Activated CD8-positive, alpha-beta T cell treated with anti-CD3 and anti-CD28 coated beads, Interleukin-2, amount 10 ng/mL, durations not matched to agents 7 days and 5 days (primary cell): ENCODE measurements at regions of chr6 and their contacts with region 1.

Region 1: GRCh38 chr6:159042003-159042825 is 2.6 kb downstream of the TAGAP start:
- DNase-seq: peak; percentile 88
- ATAC-seq: peak; percentile 51
- H3K4me3 Mint-ChIP-seq: peak overlapping the region; percentile 100
- H3K27ac Mint-ChIP-seq: peak overlapping the region; percentile 99
- H3K4me1 Mint-ChIP-seq: peaks cover 67% of the 10 kb centered on the region
- H3K27me3 Mint-ChIP-seq: no peaks in the 10 kb centered on the region

Region 2: DNA sequence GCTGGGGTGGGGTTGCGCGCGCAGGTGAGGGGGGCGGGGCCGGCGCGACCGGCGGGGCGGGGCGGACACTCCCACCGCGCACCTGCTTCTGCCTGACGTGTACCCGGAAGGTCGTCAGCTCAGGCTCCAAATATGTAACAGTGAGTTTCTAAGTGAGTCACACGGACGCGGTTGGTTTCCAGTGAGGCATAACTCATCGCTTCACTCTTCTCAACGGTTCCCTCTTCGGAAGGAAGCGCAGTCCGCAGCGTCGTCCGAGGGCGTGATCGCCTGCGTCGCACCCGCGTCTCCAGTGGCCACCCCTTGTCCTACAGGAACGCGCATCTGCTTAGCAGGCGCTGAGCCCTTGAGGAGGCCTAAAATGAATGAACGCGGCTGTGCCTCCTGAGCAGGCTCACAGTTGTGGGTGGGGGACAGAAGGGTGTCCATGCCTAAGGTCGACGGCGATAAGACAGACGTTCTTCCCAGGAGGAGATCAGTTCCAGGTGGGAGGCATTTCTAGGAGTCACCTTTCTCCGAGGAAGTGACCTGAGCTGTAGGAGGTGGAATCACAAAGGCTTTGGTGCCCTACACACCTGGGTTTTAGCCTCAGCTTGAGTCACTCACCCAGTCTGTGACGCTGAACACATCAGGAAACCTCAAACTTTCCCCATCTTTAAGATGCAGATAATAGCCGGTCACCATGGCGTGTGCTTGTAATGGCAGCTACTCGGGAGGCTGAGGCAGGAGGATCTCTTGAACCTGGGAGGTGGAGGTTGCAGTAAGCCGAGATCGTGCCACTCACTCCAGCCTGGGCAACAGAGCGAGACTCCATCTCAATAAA is 172.2 kb before region 1 on chr6:
- CTCF ChIA-PET with region 1: no interaction called
- POLR2A ChIA-PET with region 1: interaction called, 16 read pairs
- DNase-seq: peak; percentile 96
- ATAC-seq: peak; percentile 94
- H3K4me3 Mint-ChIP-seq: peak overlapping the region; percentile 74
- H3K27ac Mint-ChIP-seq: peak overlapping the region; percentile 99
- H3K4me1 Mint-ChIP-seq: peaks cover 37% of the 10 kb centered on the region
- H3K27me3 Mint-ChIP-seq: peaks cover 8% of the 10 kb centered on the region

Region 3: DNA sequence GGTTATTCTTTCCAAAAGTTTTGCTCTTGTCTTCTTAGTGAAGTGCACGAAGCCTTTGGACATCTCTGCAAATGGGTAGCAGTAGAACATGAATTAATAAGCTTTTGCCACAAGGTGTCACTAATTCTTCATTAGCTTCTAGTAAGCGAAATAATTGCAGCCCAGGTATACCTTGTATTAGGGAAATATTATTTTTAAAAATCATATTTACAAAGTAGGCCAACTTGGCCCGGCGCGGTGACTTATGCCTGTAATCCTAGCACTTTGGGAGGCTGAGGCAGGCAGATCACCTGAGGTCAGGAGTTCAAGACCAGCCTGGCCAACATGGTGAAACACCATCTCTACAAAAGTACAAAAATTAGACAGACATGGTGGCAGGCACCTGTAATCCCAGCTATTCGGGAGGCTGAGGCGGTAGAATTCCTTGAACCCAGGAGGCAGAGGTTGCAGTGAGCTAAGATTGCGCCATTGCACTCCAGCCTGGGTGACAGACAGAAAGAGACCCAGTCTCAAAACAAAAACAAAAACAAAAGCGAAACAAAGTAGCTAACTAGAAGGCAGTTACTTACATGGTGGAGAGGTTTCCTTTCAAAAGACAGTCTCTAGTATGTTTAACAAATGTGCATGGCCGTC is 33.4 kb before region 1 on chr6:
- CTCF ChIA-PET with region 1: interaction called, 132 read pairs
- POLR2A ChIA-PET with region 1: interaction called, 7 read pairs
- DNase-seq: peak; percentile 20
- ATAC-seq: peak; percentile 68
- H3K4me3 Mint-ChIP-seq: peak overlapping the region; percentile 7
- H3K27ac Mint-ChIP-seq: peak overlapping the region; percentile 18
- H3K4me1 Mint-ChIP-seq: peaks cover 19% of the 10 kb centered on the region
- H3K27me3 Mint-ChIP-seq: no peaks in the 10 kb centered on the region

Region 4: DNA sequence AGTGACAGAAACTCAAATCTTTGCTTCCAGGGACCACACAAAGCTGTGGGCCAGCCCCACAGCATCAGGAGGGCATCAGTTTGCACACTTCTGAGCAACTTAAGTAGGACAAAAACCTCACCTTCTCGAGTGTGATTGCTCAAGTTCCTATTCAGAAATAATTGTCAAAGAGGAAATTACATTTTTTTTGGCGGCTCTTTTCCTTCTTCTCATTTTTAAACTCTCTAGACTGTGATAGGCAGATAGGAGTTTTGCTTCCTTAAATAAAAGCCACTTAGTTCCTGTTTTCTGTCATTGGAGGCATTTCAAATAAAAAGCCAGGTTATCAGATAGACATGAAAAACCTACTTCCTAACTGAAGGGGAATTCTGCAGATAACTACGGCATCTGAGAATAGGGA is 13.8 kb after region 1 on chr6:
- CTCF ChIA-PET with region 1: interaction called, 94 read pairs
- POLR2A ChIA-PET with region 1: interaction called, 155 read pairs
- DNase-seq: no peak
- ATAC-seq: peak; percentile 14
- H3K4me3 Mint-ChIP-seq: peak overlapping the region; percentile 4
- H3K27ac Mint-ChIP-seq: peak overlapping the region; percentile 56
- H3K4me1 Mint-ChIP-seq: peaks cover 81% of the 10 kb centered on the region
- H3K27me3 Mint-ChIP-seq: no peaks in the 10 kb centered on the region

Region 5: GRCh38 chr6:159074120-159074684 is 32.0 kb after region 1 on chr6:
- CTCF ChIA-PET with region 1: interaction called, 24 read pairs
- POLR2A ChIA-PET with region 1: interaction called, 159 read pairs
- DNase-seq: peak; percentile 17
- ATAC-seq: no peak
- H3K4me3 Mint-ChIP-seq: no peak overlapping the region
- H3K27ac Mint-ChIP-seq: no peak overlapping the region
- H3K4me1 Mint-ChIP-seq: peaks cover 56% of the 10 kb centered on the region
- H3K27me3 Mint-ChIP-seq: no peaks in the 10 kb centered on the region

Region 6: GRCh38 chr6:159090530-159091480 is 48.6 kb after region 1 on chr6:
- CTCF ChIA-PET with region 1: interaction called, 33 read pairs
- POLR2A ChIA-PET with region 1: interaction called, 361 read pairs
- DNase-seq: peak; percentile 17
- ATAC-seq: no peak
- H3K4me3 Mint-ChIP-seq: no peak overlapping the region
- H3K27ac Mint-ChIP-seq: no peak overlapping the region
- H3K4me1 Mint-ChIP-seq: peaks cover 43% of the 10 kb centered on the region
- H3K27me3 Mint-ChIP-seq: no peaks in the 10 kb centered on the region

Region 7: GRCh38 chr6:159104163-159104925 is 62.1 kb after region 1 on chr6:
- CTCF ChIA-PET with region 1: interaction called, 426 read pairs
- POLR2A ChIA-PET with region 1: interaction called, 361 read pairs
- DNase-seq: peak; percentile 87
- ATAC-seq: peak; percentile 59
- H3K4me3 Mint-ChIP-seq: peak overlapping the region; percentile 44
- H3K27ac Mint-ChIP-seq: peak overlapping the region; percentile 93
- H3K4me1 Mint-ChIP-seq: peaks cover 84% of the 10 kb centered on the region
- H3K27me3 Mint-ChIP-seq: no peaks in the 10 kb centered on the region